ENCODE measurements at regions of chr16 and their contacts with region 1.

Region 1: DNA sequence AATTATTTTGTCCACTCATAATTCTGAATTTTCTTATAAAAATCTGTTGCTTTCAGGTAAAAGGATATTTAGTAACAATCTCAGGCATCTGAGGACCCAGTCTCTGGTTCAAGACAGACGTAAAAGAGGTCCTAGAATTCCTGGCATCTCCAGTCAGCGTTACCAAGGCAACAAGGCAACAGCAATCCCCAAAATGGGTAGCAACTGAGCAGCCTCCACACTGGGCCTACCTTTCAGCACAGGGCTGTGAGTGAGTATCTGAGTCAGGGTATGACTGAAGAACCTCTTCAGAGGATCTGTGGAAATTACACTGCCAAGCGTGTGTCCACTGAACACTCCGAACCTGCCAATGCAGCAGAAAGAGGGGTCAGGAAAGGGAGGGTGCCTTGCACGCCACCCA is 20.8 kb downstream of the FANCA start:
- DNase-seq: peak in 5 of 10 donors; percentile 19 to 63 (median 45)
- H3K4me3 ChIP-seq: no peak overlapping the region
- H3K27ac ChIP-seq: peak overlapping the region in 3 of 59 donors; percentile 27 to 60 (median 46)
- H3K27me3 ChIP-seq: no peaks in the 10 kb centered on the region
- CTCF ChIP-seq: no peak

Region 2: GRCh38 chr16:89708441-89708931 is 87.2 kb before region 1 on chr16:
- intact Hi-C with region 1: loop called in 1 of 2 experiments (anchors 1 kb)
- DNase-seq: no peak
- H3K4me3 ChIP-seq: no peak overlapping the region
- H3K27ac ChIP-seq: no peak overlapping the region
- H3K27me3 ChIP-seq: no peaks in the 10 kb centered on the region
- CTCF ChIP-seq: no peak

Region 3: DNA sequence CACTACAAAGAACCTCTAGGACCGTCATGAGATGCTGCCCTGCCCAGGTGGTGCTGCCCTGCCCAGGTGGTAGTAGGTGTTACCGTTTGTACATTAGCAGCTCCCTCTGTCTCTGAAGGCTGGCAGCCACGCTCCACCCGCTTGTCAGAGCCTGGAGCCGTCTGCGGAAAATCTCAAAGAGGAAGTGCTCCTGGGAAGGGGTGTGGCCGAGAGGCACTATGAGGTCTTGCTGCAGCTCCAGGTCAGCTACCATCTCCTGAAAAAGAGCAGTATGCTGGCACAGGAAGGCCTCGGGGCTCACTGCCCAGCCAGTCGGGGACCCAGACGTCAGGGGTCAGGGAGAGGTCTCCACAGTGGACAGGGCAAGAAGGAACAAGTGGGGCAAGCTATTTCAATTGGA is 46.0 kb before region 1 on chr16:
- intact Hi-C with region 1: loop called in 1 of 2 experiments (anchors 5 kb)
- DNase-seq: no peak
- H3K4me3 ChIP-seq: no peak overlapping the region
- H3K27ac ChIP-seq: no peak overlapping the region
- H3K27me3 ChIP-seq: no peaks in the 10 kb centered on the region
- CTCF ChIP-seq: no peak

Measured in dorsolateral prefrontal cortex (tissue), 120 donors.